Dorsolateral prefrontal cortex (tissue), 120 donors: ENCODE measurements at regions of chr6 and their contacts with region 1.

Region 1: DNA sequence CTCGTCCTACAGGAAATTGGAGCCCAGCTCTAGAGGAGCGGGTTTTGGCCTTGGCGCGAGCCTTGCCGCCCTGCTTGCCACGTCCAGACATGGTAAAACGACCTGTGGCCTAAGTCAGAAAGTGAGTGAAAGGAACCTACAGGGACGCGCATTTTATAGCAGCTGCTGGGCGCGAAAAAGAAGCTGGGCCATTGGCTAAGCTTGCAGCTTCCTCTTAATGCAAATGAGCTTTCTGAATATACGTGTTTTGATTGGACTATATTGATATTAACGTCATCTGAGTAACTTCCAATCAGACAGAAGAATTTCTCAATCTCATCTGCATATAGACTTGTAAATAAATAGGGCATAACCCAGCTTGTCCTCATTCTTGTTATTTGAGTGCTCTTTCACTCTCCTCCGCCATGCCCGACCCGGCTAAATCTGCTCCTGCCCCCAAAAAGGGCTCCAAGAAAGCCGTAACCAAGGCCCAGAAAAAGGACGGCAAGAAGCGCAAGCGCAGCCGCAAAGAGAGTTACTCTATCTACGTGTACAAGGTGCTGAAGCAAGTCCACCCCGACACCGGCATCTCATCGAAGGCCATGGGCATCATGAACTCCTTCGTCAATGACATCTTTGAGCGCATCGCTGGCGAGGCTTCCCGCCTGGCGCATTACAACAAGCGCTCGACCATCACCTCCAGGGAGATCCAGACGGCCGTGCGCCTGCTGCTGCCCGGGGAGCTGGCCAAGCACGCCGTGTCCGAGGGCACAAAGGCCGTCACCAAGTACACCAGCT is 18.9 kb downstream of the OR2B2 start:
- DNase-seq: peak in 9 of 10 donors; percentile 23 to 75 (median 63)
- H3K4me3 ChIP-seq: peak overlapping the region; percentile 54 to 96 (median 77)
- H3K27ac ChIP-seq: peak overlapping the region in 31 of 59 donors; percentile 0 to 73 (median 37)
- H3K27me3 ChIP-seq: peaks cover 0 to 57% (median 49%) of the 10 kb centered on the region in 45 donors
- CTCF ChIP-seq: no peak

Region 2: GRCh38 chr6:26285143-26286134 is 1607.8 kb before region 1 on chr6:
- intact Hi-C with region 1: loop called in 1 of 2 experiments (anchors 10 kb)
- DNase-seq: peak; percentile 90 to 97 (median 96)
- H3K4me3 ChIP-seq: peak overlapping the region; percentile 54 to 99 (median 80)
- H3K27ac ChIP-seq: peak overlapping the region; percentile 51 to 96 (median 90)
- H3K27me3 ChIP-seq: no peaks in the 10 kb centered on the region
- CTCF ChIP-seq: peak in 3 of 56 donors; percentile 8 to 15 (median 14)

Region 3: DNA sequence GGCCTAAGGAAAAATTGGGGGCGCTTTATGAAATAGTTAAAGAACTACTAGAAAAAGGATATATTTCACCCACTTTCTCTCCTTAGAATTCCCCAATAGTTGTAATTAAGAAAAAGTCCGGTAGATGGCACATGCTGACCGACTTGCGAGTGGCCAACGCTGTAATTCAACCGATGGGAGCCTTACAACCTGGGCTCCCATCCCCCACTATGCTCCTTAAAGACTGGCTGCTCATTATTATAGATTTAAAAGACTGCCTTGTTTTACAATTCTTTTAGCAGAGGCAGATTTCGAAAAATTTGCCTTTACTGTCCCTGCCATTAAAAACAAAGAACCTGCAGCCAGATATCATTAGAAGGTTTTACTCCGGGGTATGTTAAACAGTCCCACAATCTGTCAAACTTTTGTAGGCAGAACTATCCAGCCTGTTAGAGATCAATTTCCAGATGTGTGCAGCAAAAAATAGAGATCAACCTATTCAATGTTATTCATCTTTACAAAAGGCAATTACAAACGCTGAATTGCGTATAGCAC is 704.3 kb before region 1 on chr6:
- intact Hi-C with region 1: loop called in 1 of 2 experiments (anchors 5 kb)
- DNase-seq: peak in 5 of 10 donors; percentile 32 to 60 (median 38)
- H3K4me3 ChIP-seq: peak overlapping the region; percentile 40 to 92 (median 66)
- H3K27ac ChIP-seq: peak overlapping the region in 5 of 59 donors; percentile 18 to 57 (median 45)
- H3K27me3 ChIP-seq: peaks cover 0 to 26% (median 2%) of the 10 kb centered on the region in 45 donors
- CTCF ChIP-seq: peak; percentile 61 to 87 (median 79)

Region 4: GRCh38 chr6:27753668-27754407 is 139.4 kb before region 1 on chr6:
- intact Hi-C with region 1: loop called in 1 of 2 experiments (anchors 5 kb)
- DNase-seq: peak in 9 of 10 donors; percentile 44 to 76 (median 62)
- H3K4me3 ChIP-seq: peak overlapping the region; percentile 27 to 92 (median 78)
- H3K27ac ChIP-seq: peak overlapping the region in 42 of 59 donors; percentile 7 to 85 (median 52)
- H3K27me3 ChIP-seq: peaks cover 0 to 30% (median 10%) of the 10 kb centered on the region in 45 donors
- CTCF ChIP-seq: peak in 4 of 56 donors; percentile 5 to 31 (median 6)

Region 5: DNA sequence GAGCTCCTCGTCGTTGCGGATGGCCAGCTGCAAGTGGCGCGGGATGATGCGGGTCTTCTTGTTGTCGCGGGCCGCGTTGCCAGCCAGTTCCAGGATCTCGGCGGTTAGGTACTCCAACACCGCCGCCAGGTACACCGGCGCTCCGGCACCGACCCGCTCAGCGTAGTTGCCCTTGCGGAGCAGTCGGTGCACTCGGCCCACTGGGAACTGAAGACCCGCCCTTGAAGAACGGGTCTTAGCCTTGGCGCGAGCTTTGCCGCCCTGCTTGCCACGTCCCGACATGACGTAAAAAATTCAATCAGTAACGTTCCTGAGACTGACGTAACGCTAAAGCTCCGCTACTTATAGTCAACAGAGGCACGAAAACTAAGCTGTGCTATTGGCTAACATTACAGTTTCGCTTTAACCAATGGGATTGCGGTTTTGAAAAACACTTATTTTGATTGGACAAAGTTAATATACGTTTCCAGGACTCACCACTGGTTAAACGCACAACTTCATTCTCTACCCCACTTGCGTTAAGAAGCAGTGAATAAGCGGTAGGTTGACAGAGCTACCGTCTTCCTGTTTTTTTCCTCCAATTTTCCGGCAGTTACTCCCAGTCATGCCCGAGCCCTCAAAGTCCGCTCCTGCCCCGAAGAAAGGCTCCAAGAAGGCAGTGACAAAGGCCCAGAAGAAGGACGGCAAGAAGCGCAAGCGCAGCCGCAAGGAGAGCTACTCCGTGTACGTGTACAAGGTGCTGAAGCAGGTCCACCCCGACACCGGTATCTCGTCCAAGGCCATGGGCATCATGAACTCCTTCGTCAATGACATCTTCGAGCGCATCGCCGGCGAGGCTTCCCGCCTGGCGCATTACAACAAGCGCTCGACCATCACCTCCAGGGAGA is 54.9 kb before region 1 on chr6:
- intact Hi-C with region 1: loop called in 1 of 2 experiments (anchors 10 kb)
- DNase-seq: peak; percentile 36 to 80 (median 68)
- H3K4me3 ChIP-seq: peak overlapping the region; percentile 49 to 87 (median 72)
- H3K27ac ChIP-seq: peak overlapping the region; percentile 57 to 97 (median 88)
- H3K27me3 ChIP-seq: peaks cover 0 to 98% (median 8%) of the 10 kb centered on the region in 45 donors
- CTCF ChIP-seq: peak in 4 of 56 donors; percentile 9 to 21 (median 12)